ENCODE measurements at regions of chr21 and their contacts with region 1.

Region 1: DNA sequence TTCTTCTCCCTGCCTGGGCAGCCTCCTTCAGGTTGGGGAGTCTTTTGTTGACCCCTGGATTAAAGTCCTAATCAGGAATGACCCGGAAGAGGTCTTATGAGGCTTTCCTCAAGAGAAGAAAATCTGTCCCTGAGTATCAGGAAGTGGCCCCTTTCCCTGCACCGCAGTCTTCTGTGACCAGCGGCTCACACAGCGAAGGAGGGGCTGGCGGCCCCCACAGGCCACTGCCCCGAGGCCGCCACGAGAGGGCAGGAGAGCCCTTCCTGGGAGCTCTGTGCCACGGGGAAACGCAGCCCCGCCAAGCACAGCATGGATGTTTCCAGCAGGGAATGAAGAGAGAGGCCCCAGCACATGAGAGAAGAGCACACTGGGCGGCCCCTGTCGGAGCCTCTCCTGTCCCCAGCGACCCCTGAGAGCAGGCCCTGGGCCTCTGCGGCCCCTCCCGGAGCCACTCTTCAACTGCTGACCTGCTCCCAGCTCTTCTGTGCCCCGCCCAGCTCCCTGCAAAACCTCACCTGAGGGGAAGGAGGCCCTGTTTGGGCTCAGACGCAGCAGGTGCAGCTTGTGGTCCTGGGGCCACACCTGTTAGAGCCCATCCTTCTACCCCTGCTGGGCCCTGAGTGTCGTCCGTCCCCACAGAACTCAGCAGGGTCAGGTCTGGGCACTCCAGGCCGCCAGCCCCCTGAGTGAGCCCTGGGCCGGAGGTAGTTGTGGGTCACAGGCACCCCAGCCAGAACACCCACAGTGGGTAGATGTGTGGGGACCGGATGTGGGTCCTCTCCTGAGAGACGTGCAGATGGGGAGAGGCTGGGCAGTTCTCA is 4.9 kb upstream of the POFUT2 start:
- DNase-seq: peak; percentile 84
- H3K4me3 ChIP-seq: no peak overlapping the region
- H3K27ac ChIP-seq: peak overlapping the region; percentile 94
- H3K4me1 ChIP-seq: peaks cover 57% of the 10 kb centered on the region
- H3K27me3 ChIP-seq: no peaks in the 10 kb centered on the region
- CTCF ChIP-seq: peak; percentile 100

Region 2: GRCh38 chr21:45228171-45228641 is 64.4 kb before region 1 on chr21:
- intact Hi-C with region 1: no loop called
- DNase-seq: no peak
- H3K4me3 ChIP-seq: no peak overlapping the region
- H3K27ac ChIP-seq: no peak overlapping the region
- H3K4me1 ChIP-seq: no peaks in the 10 kb centered on the region
- H3K27me3 ChIP-seq: peaks cover 15% of the 10 kb centered on the region
- CTCF ChIP-seq: no peak

Region 3: GRCh38 chr21:45448810-45449657 is 156.4 kb after region 1 on chr21:
- intact Hi-C with region 1: loop called (anchors 5 kb)
- DNase-seq: no peak
- H3K4me3 ChIP-seq: no peak overlapping the region
- H3K27ac ChIP-seq: no peak overlapping the region
- H3K4me1 ChIP-seq: peaks cover 9% of the 10 kb centered on the region
- H3K27me3 ChIP-seq: no peaks in the 10 kb centered on the region
- CTCF ChIP-seq: no peak

Measured in left ventricle myocardium inferior (tissue), 1 donor.